ENCODE measurements at regions of chr5 and their contacts with region 1.

Region 1: GRCh38 chr5:162911873-162912272 is 525.5 kb upstream of the CCNG1 start:
- DNase-seq: no peak
- H3K4me3 ChIP-seq: no peak overlapping the region
- H3K27ac ChIP-seq: no peak overlapping the region
- H3K4me1 ChIP-seq: no peaks in the 10 kb centered on the region
- H3K27me3 ChIP-seq: no peaks in the 10 kb centered on the region
- CTCF ChIP-seq: no peak
- EP300 ChIP-seq: no peak
- POLR2A ChIP-seq: no peak

Region 2: DNA sequence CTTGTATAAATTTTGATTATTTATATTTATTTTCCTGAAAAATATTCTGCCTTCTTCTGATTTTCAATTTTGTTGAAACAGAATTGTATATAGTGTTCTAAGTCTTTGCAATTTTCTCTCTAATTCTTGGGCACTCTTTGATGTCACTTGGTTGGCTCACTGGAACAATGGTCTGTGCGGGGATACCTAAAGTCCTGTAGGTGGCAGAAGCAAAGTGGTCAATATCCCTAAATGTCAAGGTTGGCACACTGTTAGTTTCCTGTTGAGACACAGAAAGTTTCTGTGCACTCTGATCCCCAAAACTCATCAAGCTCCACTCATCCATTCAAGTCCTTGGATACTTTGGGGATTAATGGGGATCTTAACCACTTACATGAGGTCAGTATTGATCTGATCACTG is 44.7 kb after region 1 on chr5:
- intact Hi-C with region 1: loop called in 1 of 4 experiments (anchors 2 kb)
- DNase-seq: no peak
- H3K4me3 ChIP-seq: no peak overlapping the region
- H3K27ac ChIP-seq: no peak overlapping the region
- H3K4me1 ChIP-seq: no peaks in the 10 kb centered on the region
- H3K27me3 ChIP-seq: no peaks in the 10 kb centered on the region
- CTCF ChIP-seq: no peak
- EP300 ChIP-seq: no peak
- POLR2A ChIP-seq: no peak

Measured in ovary (tissue), 10 donors.